ENCODE measurements at regions of chr12 and their contacts with region 1.

Region 1: GRCh38 chr12:51238510-51239334 is at the start of gene DAZAP2:
- DNase-seq: peak; percentile 88
- ATAC-seq: peak; percentile 97
- H3K4me3 ChIP-seq: peak within 1 kb of the TSS; percentile 79
- H3K27ac ChIP-seq: peak within 1 kb of the TSS; percentile 98
- H3K4me1 ChIP-seq: peaks cover 3% of the 10 kb centered on the region; the same call in 1 of the 2 replicates
- H3K27me3 ChIP-seq: no peaks in the 10 kb centered on the region
- CTCF ChIP-seq: peak in 1 of 3 experiments; percentile 42; a peak in 1 of 6 replicates
- EP300 ChIP-seq: 0 out of 4 replicates have a peak, but pooled peaks have one; percentile 17 to 28
- POLR2A ChIP-seq: peak; percentile 93
- RAD21 ChIP-seq: no peak
- polyA plus RNA-seq, gene DAZAP2: 197 to 222 TPM

Region 2: DNA sequence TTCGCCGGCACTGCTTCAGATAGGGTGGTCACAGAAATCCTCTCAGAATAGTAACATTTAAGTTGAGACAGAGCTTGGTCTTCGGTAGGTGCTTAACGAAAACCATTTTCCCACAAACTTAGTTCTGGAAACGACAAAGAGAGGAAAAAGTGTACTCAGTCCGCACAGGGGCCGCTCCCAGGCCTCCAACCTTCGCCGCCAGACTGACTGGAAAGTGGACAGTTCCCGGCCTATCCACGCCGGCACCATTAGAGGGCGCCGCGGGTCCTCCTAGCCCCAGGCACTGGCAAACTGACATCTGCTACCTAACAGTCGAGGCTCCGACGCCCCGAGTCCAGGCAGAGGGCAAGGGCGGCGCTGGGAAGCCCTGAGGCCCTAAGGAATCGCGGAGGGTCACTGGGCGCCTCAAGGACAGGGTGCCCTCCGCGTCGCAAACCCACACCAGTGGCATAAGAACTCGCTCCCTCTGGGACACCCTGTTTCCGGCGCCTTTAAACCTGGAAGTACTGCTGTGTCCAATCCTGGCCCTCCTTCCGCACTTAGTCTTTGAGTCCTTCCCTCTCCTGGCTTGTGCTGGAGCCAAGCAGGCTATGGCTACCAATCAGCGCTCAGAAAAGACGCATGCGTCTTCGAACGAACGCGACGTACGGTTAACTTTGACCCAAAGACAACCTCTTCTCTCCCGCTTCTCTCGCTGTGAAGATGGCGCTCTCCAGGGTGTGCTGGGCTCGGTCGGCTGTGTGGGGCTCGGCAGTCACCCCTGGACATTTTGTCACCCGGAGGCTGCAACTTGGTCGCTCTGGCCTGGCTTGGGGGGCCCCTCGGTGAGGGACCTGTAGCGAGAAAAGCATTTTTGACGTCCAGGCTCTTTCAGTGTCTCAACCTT is 190.8 kb before region 1 on chr12 and contains the start of gene LETMD1:
- CTCF ChIA-PET with region 1: interaction called, 3 read pairs
- POLR2A ChIA-PET with region 1: interaction called, 7 read pairs
- RAD21 ChIA-PET with region 1: no interaction called
- SMC1A ChIA-PET with region 1: no interaction called
- in situ Hi-C with region 1: no loop called
- intact Hi-C with region 1: loop called (anchors 5 kb)
- DNase-seq: peak; percentile 98
- ATAC-seq: peak; percentile 98
- H3K4me3 ChIP-seq: peak within 1 kb of the TSS; percentile 94
- H3K27ac ChIP-seq: peak within 1 kb of the TSS; percentile 96
- H3K4me1 ChIP-seq: peaks cover 6% of the 10 kb centered on the region
- H3K27me3 ChIP-seq: no peaks in the 10 kb centered on the region
- CTCF ChIP-seq: peak; percentile 92 to 97 (median 94)
- EP300 ChIP-seq: no peak
- POLR2A ChIP-seq: peak; percentile 95
- RAD21 ChIP-seq: peak; percentile 82
- polyA plus RNA-seq, gene LETMD1: 36.5 to 37.1 TPM

Region 3: GRCh38 chr12:51172515-51173431 is 65.9 kb before region 1 on chr12 and contains the start of gene TFCP2:
- CTCF ChIA-PET with region 1: interaction called, 3 read pairs
- POLR2A ChIA-PET with region 1: interaction called, 4 read pairs
- RAD21 ChIA-PET with region 1: interaction called, 3 read pairs
- SMC1A ChIA-PET with region 1: interaction called, 3 read pairs
- in situ Hi-C with region 1: no loop called
- intact Hi-C with region 1: loop called (anchors 2 kb)
- DNase-seq: peak; percentile 82
- ATAC-seq: peak; percentile 95
- H3K4me3 ChIP-seq: peak within 1 kb of the TSS; percentile 97
- H3K27ac ChIP-seq: peak within 1 kb of the TSS; percentile 95
- H3K4me1 ChIP-seq: peaks cover 3% of the 10 kb centered on the region; the same call in 1 of the 2 replicates
- H3K27me3 ChIP-seq: no peaks in the 10 kb centered on the region
- CTCF ChIP-seq: no peak
- EP300 ChIP-seq: 0 out of 4 replicates have a peak, but pooled peaks of 1 of the 2 experiments have one; percentile 16
- POLR2A ChIP-seq: peak; percentile 82
- RAD21 ChIP-seq: no peak
- polyA plus RNA-seq, gene TFCP2: 5.8 to 9.4 TPM

Region 4: DNA sequence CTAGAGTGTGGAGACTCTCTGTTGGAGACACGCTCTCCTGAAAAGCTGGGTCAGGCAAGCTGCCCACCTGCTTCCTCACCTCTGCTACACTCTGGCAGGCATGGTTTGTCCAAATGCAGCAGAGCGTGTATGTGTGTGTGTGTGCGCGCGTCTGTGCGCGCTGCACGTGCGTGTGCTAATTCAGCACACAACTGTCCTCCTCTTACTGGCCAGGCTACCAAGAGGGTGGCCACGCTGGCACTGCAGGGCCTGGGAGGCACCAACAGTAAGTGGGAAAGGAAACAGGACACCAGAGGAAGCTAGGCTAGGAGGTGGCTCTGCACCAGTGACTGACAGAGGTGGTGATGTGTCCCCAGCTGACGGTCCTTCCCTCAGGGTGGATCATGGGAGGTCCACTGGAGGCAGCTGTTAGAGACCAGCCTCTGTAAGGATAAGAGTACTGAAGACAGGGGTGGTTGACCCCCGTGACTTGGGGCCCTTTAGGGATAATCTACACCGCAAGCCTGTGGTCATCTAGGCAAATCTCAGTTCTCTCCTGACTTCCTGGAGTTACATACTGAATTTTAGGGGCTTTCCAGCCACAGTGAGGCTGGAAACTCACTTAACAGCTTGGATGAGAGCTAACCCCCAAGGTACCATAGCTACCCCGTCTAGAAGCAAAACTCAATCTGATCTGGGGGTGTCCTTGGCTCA is 50.2 kb before region 1 on chr12:
- CTCF ChIA-PET with region 1: interaction called, 4 read pairs
- POLR2A ChIA-PET with region 1: interaction called, 14 read pairs
- RAD21 ChIA-PET with region 1: no interaction called
- SMC1A ChIA-PET with region 1: interaction called, 4 read pairs
- in situ Hi-C with region 1: no loop called
- intact Hi-C with region 1: no loop called
- DNase-seq: peak; percentile 60
- ATAC-seq: peak; percentile 86
- H3K4me3 ChIP-seq: 0 out of 2 replicates have a peak overlapping the region, but pooled peaks have one; percentile 17
- H3K27ac ChIP-seq: peak overlapping the region; percentile 70
- H3K4me1 ChIP-seq: peaks cover 31% of the 10 kb centered on the region
- H3K27me3 ChIP-seq: no peaks in the 10 kb centered on the region
- CTCF ChIP-seq: no peak
- EP300 ChIP-seq: peak; percentile 32 to 43; a peak in 1 of 4 replicates
- POLR2A ChIP-seq: no peak
- RAD21 ChIP-seq: no peak

Region 5: DNA sequence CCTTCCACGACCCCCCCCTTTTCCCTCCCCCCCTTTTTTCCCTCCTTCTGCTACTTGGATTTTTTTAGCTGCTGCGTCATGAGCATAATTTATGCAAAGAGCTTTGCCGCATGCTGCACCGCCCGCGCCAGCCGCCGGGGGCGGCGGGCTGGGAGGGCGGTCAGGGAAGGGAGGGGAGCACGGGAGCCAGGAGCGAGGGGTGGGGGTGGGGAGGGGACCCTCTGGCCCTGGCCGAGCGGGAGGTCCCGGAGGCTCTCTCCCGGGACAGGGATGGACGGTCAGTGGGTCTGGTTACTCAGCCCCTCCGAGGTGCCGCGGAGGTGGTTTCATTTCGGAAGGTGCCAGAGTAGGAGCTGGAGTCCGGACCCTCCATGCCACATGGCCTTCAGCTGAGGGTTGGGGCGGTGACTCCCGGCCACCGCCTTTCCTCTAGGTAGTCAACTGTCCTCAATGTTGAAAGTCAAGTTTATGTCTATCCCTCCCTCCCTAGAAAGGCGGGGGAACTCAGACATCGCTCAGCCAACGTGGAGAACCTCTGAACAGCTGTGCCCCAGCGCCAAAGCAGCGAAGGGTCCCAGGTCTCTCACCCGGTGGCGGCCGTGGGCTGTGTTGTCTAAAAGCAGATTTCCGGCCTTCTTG is 20.6 kb before region 1 on chr12 and contains the start of gene POU6F1:
- CTCF ChIA-PET with region 1: interaction called, 5 read pairs
- POLR2A ChIA-PET with region 1: interaction called, 16 read pairs
- RAD21 ChIA-PET with region 1: interaction called, 9 read pairs
- SMC1A ChIA-PET with region 1: interaction called, 8 read pairs
- in situ Hi-C with region 1: no loop called
- intact Hi-C with region 1: no loop called
- DNase-seq: peak; percentile 25
- ATAC-seq: peak; percentile 90
- H3K4me3 ChIP-seq: peak within 1 kb of the TSS; percentile 77
- H3K27ac ChIP-seq: peak within 1 kb of the TSS; percentile 62
- H3K4me1 ChIP-seq: peaks cover 4% of the 10 kb centered on the region; the same call in 1 of the 2 replicates
- H3K27me3 ChIP-seq: no peaks in the 10 kb centered on the region
- CTCF ChIP-seq: peak; percentile 43 to 73 (median 44); a peak in 5 of 6 replicates
- EP300 ChIP-seq: no peak
- POLR2A ChIP-seq: peak; percentile 75
- RAD21 ChIP-seq: peak; percentile 30; the same call in 1 of the 2 replicates
- polyA plus RNA-seq, gene POU6F1: 0.26 to 0.31 TPM

Region 6: GRCh38 chr12:51254592-51254991 is 15.9 kb after region 1 on chr12:
- CTCF ChIA-PET with region 1: interaction called, 17 read pairs
- POLR2A ChIA-PET with region 1: interaction called, 4 read pairs
- RAD21 ChIA-PET with region 1: interaction called, 4 read pairs
- SMC1A ChIA-PET with region 1: interaction called, 9 read pairs
- in situ Hi-C with region 1: no loop called
- intact Hi-C with region 1: no loop called
- DNase-seq: no peak
- ATAC-seq: no peak
- H3K4me3 ChIP-seq: no peak overlapping the region
- H3K27ac ChIP-seq: no peak overlapping the region
- H3K4me1 ChIP-seq: no peaks in the 10 kb centered on the region
- H3K27me3 ChIP-seq: no peaks in the 10 kb centered on the region
- CTCF ChIP-seq: no peak
- EP300 ChIP-seq: no peak
- POLR2A ChIP-seq: no peak
- RAD21 ChIP-seq: no peak

Region 7: GRCh38 chr12:51622564-51622963 is 383.8 kb after region 1 on chr12:
- CTCF ChIA-PET with region 1: no interaction called
- POLR2A ChIA-PET with region 1: no interaction called
- RAD21 ChIA-PET with region 1: no interaction called
- SMC1A ChIA-PET with region 1: no interaction called
- in situ Hi-C with region 1: no loop called
- intact Hi-C with region 1: no loop called
- DNase-seq: no peak
- ATAC-seq: no peak
- H3K4me3 ChIP-seq: no peak overlapping the region
- H3K27ac ChIP-seq: no peak overlapping the region
- H3K4me1 ChIP-seq: no peaks in the 10 kb centered on the region
- H3K27me3 ChIP-seq: 0 out of 4 replicates have a peak, but pooled peaks cover 0 to 4% of the 10 kb centered on the region in 2 experiments
- CTCF ChIP-seq: no peak
- EP300 ChIP-seq: no peak
- POLR2A ChIP-seq: no peak
- RAD21 ChIP-seq: no peak

Measured in GM12878 (cell line).